K562 (cell line): ENCODE measurements at regions of chr7 and their contacts with region 1.

Region 1: GRCh38 chr7:66654123-66654732 is 25.5 kb downstream of the KCTD7 start:
- DNase-seq: peak; percentile 97 to 100 (median 98)
- ATAC-seq: peak; percentile 94
- H3K4me3 ChIP-seq: peak overlapping the region; percentile 61
- H3K27ac ChIP-seq: peak overlapping the region; percentile 99
- H3K4me1 ChIP-seq: peaks cover 6 to 30% of the 10 kb centered on the region in 2 experiments; a peak in 4 of 5 replicates
- H3K27me3 ChIP-seq: no peaks in the 10 kb centered on the region
- CTCF ChIP-seq: peak in 2 of 3 experiments; percentile 28 to 38; a peak in 2 of 6 replicates
- EP300 ChIP-seq: peak; percentile 37; the same call in 1 of the 2 replicates
- POLR2A ChIP-seq: peak; percentile 97
- RAD21 ChIP-seq: no peak; a peak in 1 of 4 replicates

Region 2: DNA sequence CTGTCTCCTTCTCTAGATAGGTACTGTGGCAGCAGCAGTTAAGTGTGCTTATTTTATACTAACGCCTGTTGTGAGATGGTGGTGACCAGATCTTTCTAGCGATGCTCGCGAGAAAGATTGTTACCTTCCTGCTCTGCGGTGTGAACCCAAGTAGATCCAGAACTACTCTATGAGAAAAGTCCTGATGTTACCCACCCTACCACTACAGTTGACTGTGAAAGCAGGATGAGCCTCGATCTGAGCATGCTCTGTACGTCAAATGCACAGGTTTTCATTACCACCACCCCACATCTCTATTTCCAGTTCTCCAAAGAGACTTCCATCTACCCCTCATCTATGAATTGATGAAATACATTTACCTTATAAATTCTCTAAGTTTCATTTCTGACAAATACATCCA is 90.2 kb before region 1 on chr7:
- CTCF ChIA-PET with region 1: no interaction called
- POLR2A ChIA-PET with region 1: no interaction called
- in situ Hi-C with region 1: no loop called
- intact Hi-C with region 1: loop called (anchors 10 kb)
- DNase-seq: peak in 1 of 4 experiments; percentile 25
- ATAC-seq: peak; percentile 57
- H3K4me3 ChIP-seq: no peak overlapping the region
- H3K27ac ChIP-seq: no peak overlapping the region
- H3K4me1 ChIP-seq: no peaks in the 10 kb centered on the region
- H3K27me3 ChIP-seq: no peaks in the 10 kb centered on the region
- CTCF ChIP-seq: no peak
- EP300 ChIP-seq: no peak
- POLR2A ChIP-seq: no peak
- RAD21 ChIP-seq: no peak

Region 3: GRCh38 chr7:66628361-66629140 is 25.7 kb before region 1 on chr7 and contains the start of gene KCTD7:
- CTCF ChIA-PET with region 1: no interaction called
- POLR2A ChIA-PET with region 1: interaction called, 15 read pairs
- in situ Hi-C with region 1: no loop called
- intact Hi-C with region 1: no loop called
- DNase-seq: peak; percentile 98 to 100 (median 100)
- ATAC-seq: peak; percentile 98
- H3K4me3 ChIP-seq: peak within 1 kb of the TSS; percentile 67
- H3K27ac ChIP-seq: peak within 1 kb of the TSS; percentile 78
- H3K4me1 ChIP-seq: peaks cover 9 to 21% of the 10 kb centered on the region in 2 experiments
- H3K27me3 ChIP-seq: 0 out of 5 replicates have a peak, but pooled peaks cover 0 to 2% of the 10 kb centered on the region in 2 experiments
- CTCF ChIP-seq: no peak; a peak in 1 of 6 replicates
- EP300 ChIP-seq: no peak
- POLR2A ChIP-seq: peak; percentile 96
- RAD21 ChIP-seq: no peak
- polyA plus RNA-seq, gene KCTD7: 1.5 to 1.7 TPM

Region 4: DNA sequence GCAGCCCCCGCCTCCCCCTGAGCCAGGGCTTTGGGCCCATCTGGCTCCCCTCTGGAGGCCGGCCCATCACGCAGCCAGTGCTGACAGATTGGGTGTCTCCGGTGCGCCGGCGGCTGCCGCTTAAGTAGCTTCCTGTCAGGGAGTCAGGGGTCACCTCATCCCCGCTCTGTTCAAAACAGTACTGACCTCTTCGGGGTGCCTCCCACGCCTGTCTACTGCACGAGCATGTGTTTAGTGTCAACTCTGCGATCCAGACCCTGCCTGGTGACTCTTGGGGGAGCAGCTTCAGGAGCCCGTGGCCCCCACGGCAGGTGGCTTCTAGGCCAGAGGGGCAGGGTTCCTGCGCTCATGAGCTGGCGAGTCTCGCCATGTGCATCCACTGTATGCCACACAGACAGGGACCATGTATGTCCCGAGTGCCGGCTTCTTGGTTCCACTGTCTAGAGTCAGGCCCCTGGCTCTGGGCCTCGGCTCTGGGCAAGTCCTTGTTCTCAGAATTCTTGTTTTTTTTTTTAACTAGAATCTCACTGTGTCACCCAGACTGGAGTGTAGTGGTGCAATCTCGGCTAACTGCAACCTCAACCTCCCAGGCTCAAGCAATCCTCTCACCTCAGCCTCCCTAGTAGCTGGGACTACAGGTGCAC is 10.5 kb after region 1 on chr7:
- CTCF ChIA-PET with region 1: no interaction called
- POLR2A ChIA-PET with region 1: interaction called, 13 read pairs
- in situ Hi-C with region 1: no loop called
- intact Hi-C with region 1: no loop called
- DNase-seq: peak in 1 of 4 experiments; percentile 30
- ATAC-seq: peak; percentile 67
- H3K4me3 ChIP-seq: no peak overlapping the region
- H3K27ac ChIP-seq: no peak overlapping the region
- H3K4me1 ChIP-seq: peaks cover 0 to 11% of the 10 kb centered on the region in 2 experiments; a peak in 2 of 5 replicates
- H3K27me3 ChIP-seq: no peaks in the 10 kb centered on the region
- CTCF ChIP-seq: no peak
- EP300 ChIP-seq: no peak
- POLR2A ChIP-seq: no peak
- RAD21 ChIP-seq: no peak